ENCODE measurements at regions of chr1 and their contacts with region 1.

Region 1: GRCh38 chr1:186155594-186155993 is 219.5 kb downstream of the TPR start:
- DNase-seq: peak; percentile 28
- H3K4me3 Mint-ChIP-seq: no peak overlapping the region
- H3K27ac Mint-ChIP-seq: no peak overlapping the region
- H3K4me1 Mint-ChIP-seq: no peaks in the 10 kb centered on the region
- H3K27me3 Mint-ChIP-seq: peaks cover 3% of the 10 kb centered on the region

Region 2: GRCh38 chr1:186188004-186188539 is 32.5 kb after region 1 on chr1:
- CTCF ChIA-PET with region 1: no interaction called
- intact Hi-C with region 1: no loop called
- DNase-seq: no peak
- H3K4me3 Mint-ChIP-seq: no peak overlapping the region
- H3K27ac Mint-ChIP-seq: no peak overlapping the region
- H3K4me1 Mint-ChIP-seq: peaks cover 11% of the 10 kb centered on the region
- H3K27me3 Mint-ChIP-seq: peaks cover 17% of the 10 kb centered on the region

Region 3: DNA sequence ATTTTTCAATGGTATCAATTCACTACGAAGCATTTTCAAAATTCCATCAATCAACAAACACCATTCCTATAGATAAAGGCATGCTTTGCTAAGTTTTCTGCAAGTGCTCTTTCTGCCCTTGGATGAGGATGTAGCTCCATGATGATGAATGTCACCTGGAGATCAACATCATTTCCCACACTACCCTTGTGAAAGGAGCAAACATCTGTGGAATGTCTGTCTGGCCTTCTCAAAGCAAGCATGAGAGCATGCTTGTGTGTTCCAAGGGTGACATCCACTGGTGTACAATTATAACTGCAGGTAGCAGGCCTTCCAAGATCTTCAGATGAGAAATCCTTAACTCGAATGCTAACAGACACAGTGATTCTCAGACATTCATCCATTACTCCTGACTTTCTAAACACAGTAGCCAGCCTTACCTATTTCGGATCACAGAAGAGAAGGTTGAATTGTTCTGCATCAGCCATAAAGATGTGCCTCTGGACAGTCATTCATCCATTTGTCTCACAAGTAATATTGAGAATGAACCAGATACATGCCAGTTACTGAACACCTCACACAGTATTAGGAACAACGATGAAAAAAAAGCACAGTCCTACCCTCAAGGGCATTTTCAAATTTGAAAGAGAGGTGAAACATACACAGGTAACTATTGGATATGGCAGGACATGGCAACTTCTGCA is 57.1 kb after region 1 on chr1:
- CTCF ChIA-PET with region 1: interaction called, 7 read pairs
- intact Hi-C with region 1: loop called (anchors 1 kb)
- DNase-seq: peak; percentile 45
- H3K4me3 Mint-ChIP-seq: no peak overlapping the region
- H3K27ac Mint-ChIP-seq: no peak overlapping the region
- H3K4me1 Mint-ChIP-seq: no peaks in the 10 kb centered on the region
- H3K27me3 Mint-ChIP-seq: peaks cover 38% of the 10 kb centered on the region

Region 4: DNA sequence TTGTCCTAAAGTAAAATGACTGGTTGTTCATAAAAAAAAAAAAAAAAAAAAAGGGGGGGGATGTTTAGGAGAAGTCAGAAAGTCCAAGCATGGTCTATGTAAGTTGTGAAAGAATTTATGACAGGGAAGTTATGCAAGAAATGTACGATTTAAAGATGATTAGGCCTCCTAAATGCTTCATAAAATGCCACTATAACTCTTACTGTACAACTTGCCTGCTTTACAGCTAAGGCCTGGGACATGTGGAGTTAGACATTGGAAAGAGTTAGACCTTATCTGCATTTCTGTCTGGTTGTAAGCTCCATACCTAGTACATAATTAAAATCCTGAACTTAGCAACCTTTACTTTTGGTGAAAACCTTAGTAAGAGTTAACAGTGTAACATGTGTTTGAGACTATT is 69.5 kb after region 1 on chr1:
- CTCF ChIA-PET with region 1: no interaction called
- intact Hi-C with region 1: no loop called
- DNase-seq: no peak
- H3K4me3 Mint-ChIP-seq: no peak overlapping the region
- H3K27ac Mint-ChIP-seq: no peak overlapping the region
- H3K4me1 Mint-ChIP-seq: no peaks in the 10 kb centered on the region
- H3K27me3 Mint-ChIP-seq: peaks cover 3% of the 10 kb centered on the region

Region 5: DNA sequence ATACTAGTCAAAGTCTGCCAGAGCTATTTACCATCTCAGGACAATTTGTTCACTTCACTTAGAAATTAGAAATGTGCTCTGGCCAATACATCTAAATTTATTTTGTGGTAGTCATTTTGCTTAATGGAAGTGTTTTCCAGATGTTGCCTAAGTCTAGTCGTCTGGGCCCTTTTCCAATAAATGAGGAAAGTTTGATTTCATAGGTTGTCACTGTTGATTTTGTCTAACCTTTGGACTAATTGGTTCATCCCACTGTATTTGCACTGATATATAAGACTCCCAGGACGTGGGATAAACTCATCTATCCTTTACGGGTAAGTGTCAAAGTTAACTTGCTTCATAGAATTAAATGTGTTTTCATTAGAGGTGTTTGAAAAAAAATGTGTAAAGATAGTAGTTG is 140.4 kb after region 1 on chr1:
- CTCF ChIA-PET with region 1: interaction called, 4 read pairs
- intact Hi-C with region 1: loop called (anchors 1 kb)
- DNase-seq: no peak
- H3K4me3 Mint-ChIP-seq: peak within 1 kb of the TSS; percentile 42
- H3K27ac Mint-ChIP-seq: peak within 1 kb of the TSS; percentile 99
- H3K4me1 Mint-ChIP-seq: peaks cover 69% of the 10 kb centered on the region
- H3K27me3 Mint-ChIP-seq: no peaks in the 10 kb centered on the region

Region 6: DNA sequence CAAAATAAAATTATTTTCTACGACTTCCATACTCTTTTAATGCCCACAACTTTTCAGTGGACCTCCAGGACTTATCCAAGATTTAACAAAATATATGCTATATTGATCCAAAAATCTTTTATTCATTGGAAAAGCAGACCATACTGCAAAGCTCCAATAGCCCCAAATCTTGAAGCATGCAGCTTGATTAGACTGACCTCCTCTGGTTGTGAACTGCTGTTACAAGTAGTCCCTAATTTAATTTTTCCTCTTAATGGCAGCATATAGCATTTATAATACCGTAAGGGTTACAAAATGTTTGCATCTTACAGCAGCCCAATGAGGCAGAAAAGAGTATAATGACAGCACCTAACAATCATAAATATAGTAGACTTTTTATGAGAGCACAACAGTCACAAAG is 169.6 kb after region 1 on chr1:
- CTCF ChIA-PET with region 1: no interaction called
- intact Hi-C with region 1: loop called (anchors 1 kb)
- DNase-seq: no peak
- H3K4me3 Mint-ChIP-seq: no peak overlapping the region
- H3K27ac Mint-ChIP-seq: no peak overlapping the region
- H3K4me1 Mint-ChIP-seq: peaks cover 39% of the 10 kb centered on the region
- H3K27me3 Mint-ChIP-seq: no peaks in the 10 kb centered on the region

Measured in activated naive CD4-positive, alpha-beta T cell treated with anti-CD3 and anti-CD28 coated beads for 36 hours (primary cell).